ENCODE measurements at regions of chr7 and their contacts with region 1.

Region 1: GRCh38 chr7:13279854-13280435 is 592.5 kb downstream of the ARL4A start:
- DNase-seq: no peak
- ATAC-seq: no peak

Region 2: DNA sequence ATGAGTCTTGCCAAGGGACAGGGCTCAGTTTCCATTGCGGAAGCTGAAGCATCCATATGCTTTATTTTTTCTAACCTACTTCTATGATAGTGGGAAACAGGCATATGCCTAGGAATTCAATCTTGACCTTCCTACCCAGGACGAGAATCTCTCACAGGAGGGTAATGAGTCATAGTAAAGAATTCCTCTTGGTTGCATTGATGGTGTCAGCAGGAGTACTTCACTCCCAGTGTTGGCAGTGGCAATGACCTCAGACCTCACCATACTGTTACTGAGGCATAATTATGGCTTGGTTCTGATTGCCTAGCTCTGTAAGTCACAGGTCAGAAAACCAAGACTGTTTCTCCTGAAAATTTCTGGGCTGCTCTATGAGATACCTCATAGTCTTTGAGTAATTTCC is 39.6 kb before region 1 on chr7:
- intact Hi-C with region 1: no loop called
- DNase-seq: no peak
- ATAC-seq: no peak

Region 3: DNA sequence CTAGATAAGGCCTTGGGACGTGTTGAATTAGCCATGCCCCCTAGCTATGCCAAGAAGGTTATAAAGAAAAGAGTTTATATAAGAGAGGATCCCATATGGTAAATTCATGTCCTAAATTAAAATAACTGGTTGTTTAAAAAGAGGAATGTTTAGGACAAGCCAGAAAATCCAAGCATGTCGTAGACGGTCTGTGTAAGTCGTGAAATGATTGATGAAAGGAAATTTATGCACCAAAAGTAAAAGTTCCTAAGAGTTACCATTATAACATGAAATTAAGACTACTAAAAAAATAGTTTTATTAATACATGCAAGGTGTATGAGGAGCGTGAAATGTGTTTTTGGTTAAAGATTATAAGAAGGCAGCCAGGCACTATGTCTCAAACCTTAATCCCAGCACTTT is 32.4 kb after region 1 on chr7:
- intact Hi-C with region 1: no loop called
- DNase-seq: no peak
- ATAC-seq: no peak

Region 4: DNA sequence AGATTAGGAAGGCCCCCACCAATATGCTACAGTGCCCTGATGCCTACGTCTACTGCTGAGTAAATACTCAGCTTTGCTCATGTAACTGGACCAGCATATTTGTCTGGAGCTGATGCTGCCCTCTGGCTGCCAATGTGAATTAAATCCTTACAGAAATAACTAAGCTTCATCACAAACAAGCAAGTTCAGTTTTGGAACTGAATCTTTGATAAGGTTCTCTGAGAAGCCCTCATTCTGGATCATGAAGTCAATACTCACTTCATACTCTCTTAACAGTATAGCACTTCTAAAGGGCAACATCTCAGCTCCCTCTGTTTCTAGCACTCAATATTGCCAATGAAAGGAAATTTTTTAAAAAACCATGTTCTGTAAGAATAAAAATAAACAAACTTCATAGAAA is 462.9 kb after region 1 on chr7:
- intact Hi-C with region 1: loop called (anchors 5 kb)
- DNase-seq: no peak
- ATAC-seq: peak; percentile 77

Region 5: DNA sequence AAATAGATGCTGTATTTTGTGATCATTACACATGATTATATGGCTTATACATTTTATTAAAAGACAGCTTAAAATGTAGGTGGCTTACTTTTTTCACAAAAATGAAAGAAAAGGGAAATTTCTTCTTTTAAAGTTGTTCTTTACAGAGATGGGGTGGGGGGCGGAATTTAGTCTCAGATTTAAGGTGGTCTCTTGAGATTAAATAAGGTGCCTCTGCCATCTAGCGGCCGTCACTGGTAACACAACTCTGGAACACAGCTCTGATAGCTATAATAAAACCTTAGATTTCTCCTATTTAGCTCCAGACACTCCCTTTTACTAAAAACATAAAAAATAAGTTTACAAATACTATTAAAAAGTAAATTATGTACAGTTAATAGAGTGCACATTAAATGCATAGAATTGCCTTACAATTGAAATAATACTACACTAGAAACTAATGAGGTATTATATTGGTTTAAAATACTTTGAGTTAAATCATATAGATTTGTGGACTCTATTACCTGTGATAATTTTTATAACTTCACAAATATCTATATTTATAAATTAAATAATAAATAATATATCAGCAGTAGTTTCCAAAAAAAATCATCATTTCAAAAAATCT is 1411.8 kb after region 1 on chr7:
- intact Hi-C with region 1: loop called (anchors 2 kb)
- DNase-seq: peak; percentile 15
- ATAC-seq: no peak

Measured in Right ventricle myocardium inferior (tissue), 1 donor.